ENCODE measurements at regions of chr10 and their contacts with region 1.

Region 1: DNA sequence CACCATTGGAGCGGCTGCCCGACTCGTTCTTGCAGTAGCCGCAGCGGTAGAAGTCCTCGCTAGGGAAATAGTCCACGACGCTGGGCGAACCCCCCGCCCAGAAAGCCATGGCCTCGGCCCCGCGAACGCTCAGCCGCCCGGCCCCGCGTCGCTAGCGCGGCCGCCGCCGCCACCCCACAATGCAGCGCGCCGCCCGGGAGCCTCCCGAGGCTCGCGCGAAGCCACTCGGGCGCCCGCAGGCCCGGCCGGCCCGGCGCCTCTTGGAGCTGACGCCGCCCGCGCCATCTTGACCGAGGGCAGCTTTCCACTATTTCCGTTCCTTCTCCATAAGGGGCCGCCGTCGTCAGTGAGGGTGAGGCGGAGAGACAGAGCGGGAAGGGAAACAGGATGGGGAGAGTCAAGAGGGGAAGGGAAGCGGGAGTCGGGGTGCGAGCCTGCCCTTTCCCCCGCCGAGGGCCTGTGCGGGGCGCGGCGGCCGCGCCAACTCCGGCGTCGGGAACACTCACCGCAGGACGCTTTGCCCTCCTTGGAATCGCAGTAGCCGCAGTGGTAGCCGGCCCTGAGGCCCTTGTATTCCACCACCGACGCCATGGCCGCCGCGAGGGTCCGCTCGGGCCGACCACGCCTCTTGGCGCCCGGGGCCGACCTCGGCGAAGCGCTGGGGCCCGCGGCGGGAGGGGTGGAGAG is at the start of gene ATE1:
- DNase-seq: peak; percentile 82
- H3K4me3 Mint-ChIP-seq: peak within 1 kb of the TSS; percentile 91
- H3K27ac Mint-ChIP-seq: peak within 1 kb of the TSS; percentile 96
- H3K4me1 Mint-ChIP-seq: peaks cover 19% of the 10 kb centered on the region
- H3K27me3 Mint-ChIP-seq: no peaks in the 10 kb centered on the region
- total RNA-seq, gene ATE1: 37.5 and 40.2 TPM in 2 replicates

Region 2: GRCh38 chr10:120850911-120851865 is 1076.8 kb before region 1 on chr10 and contains the start of gene WDR11:
- intact Hi-C with region 1: loop called (anchors 5 kb)
- DNase-seq: peak; percentile 65
- H3K4me3 Mint-ChIP-seq: peak within 1 kb of the TSS; percentile 95
- H3K27ac Mint-ChIP-seq: peak within 1 kb of the TSS; percentile 96
- H3K4me1 Mint-ChIP-seq: peaks cover 49% of the 10 kb centered on the region
- H3K27me3 Mint-ChIP-seq: peaks cover 4% of the 10 kb centered on the region
- total RNA-seq, gene WDR11: 53.0 and 53.1 TPM in 2 replicates

Region 3: GRCh38 chr10:121886997-121887622 is 40.9 kb before region 1 on chr10:
- intact Hi-C with region 1: no loop called
- DNase-seq: peak; percentile 3
- H3K4me3 Mint-ChIP-seq: no peak overlapping the region
- H3K27ac Mint-ChIP-seq: no peak overlapping the region
- H3K4me1 Mint-ChIP-seq: no peaks in the 10 kb centered on the region
- H3K27me3 Mint-ChIP-seq: no peaks in the 10 kb centered on the region

Region 4: GRCh38 chr10:121974535-121975294 is 46.7 kb after region 1 on chr10 and contains the start of gene NSMCE4A:
- intact Hi-C with region 1: loop called (anchors 1 kb)
- DNase-seq: peak; percentile 68
- H3K4me3 Mint-ChIP-seq: peak within 1 kb of the TSS; percentile 89
- H3K27ac Mint-ChIP-seq: no peak within 1 kb of the TSS
- H3K4me1 Mint-ChIP-seq: peaks cover 19% of the 10 kb centered on the region
- H3K27me3 Mint-ChIP-seq: no peaks in the 10 kb centered on the region
- total RNA-seq, gene NSMCE4A: 77.2 and 79.1 TPM in 2 replicates

Measured in activated T-helper 1 cell treated with anti-CD3 and anti-CD28 coated beads, Interleukin-12 subunit alpha, Interleukin-12 subunit beta, Interleukin-2, Interleukin-4 antibody, amounts not matched to agents 30 ng/mL and 10 ng/mL and 1 ng/mL, durations not matched to agents 14 hours and 24 hours and 36 hours (primary cell).